Cardiac septum (tissue), 1 donor: ENCODE measurements at regions of chr17 and their contacts with region 1.

Region 1: GRCh38 chr17:45277216-45277849 is 15.4 kb upstream of the SPATA32 start:
- DNase-seq: peak; percentile 96

Region 2: DNA sequence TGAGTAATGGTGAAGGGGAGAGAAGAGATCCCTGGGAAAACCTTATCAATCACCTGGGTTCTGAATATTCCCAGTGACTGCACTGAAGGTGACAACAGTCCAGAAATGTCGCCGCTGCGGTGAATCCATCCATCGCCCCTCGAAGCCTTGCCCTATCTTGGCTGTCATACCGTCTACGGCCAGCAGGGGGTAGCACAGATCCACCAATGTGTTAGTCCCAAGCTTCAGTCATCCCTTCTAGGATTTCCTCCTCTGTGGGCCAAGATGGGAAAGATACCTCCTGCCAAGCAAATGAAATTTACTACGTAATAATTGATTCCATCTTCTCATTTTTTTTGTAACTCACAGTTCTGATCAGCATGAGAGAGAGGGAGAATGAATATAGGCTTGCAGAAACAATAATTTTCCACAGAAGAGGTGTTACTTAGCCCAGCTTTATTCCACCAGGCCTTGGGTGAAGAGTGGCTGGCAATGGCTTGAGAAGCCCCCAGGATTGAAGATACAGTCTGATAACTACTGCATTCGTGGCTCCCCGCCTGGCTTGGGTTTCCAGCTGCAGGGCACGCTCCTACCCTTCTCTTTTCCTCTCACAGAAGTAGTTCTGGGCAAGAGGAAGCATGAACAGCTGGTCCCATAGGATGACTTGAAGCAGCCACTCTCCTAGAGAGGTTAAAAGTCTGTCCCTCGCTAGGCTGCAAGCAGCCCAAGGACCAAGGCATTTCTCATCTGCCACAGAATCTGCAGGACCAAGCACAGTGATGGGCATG is 58.3 kb before region 1 on chr17:
- intact Hi-C with region 1: loop called (anchors 5 kb)
- DNase-seq: peak; percentile 88

Region 3: GRCh38 chr17:45311760-45312476 is 34.6 kb after region 1 on chr17:
- intact Hi-C with region 1: loop called (anchors 1 kb)
- DNase-seq: peak; percentile 84

Region 4: DNA sequence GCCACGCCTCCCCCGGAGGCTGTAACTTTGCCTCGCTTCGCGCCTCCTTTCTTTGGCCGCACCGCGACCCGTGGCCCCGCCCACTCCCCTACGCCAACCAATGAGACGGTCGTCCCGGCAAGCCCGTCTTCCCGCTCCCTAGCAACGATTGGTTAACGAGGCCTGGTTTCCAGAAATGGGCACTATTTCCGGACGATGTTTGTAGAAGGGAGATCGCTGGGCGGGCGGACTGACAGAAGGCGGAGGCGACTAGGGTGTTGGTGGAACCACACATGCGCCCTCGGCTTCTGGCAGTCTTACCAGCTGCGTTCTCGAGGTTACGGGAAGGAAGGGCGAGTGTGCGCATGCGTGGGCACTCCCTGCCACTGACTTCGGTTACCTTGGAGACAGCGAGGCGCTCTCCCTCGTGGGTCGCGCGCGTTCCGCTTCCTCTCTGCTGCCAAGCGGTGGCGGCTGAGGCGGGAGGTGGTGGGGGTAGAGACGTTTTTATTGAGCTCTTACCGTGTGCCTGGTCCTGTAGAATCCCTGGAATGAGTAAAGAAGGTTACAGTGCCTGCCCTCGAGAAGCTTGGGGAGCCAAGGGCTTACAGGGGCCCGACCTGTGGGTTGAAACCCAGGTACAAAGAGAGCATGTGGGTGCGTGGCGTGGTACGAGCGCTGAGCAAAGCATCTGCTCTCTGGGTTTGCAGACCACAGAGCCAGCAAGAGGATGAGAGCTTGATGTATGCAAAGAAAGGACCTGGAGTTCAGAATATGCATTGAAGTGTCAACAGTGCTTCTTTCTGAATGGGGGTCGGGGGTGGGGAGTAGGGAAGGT is 40.0 kb after region 1 on chr17:
- intact Hi-C with region 1: loop called (anchors 2 kb)
- DNase-seq: peak; percentile 100

Region 5: DNA sequence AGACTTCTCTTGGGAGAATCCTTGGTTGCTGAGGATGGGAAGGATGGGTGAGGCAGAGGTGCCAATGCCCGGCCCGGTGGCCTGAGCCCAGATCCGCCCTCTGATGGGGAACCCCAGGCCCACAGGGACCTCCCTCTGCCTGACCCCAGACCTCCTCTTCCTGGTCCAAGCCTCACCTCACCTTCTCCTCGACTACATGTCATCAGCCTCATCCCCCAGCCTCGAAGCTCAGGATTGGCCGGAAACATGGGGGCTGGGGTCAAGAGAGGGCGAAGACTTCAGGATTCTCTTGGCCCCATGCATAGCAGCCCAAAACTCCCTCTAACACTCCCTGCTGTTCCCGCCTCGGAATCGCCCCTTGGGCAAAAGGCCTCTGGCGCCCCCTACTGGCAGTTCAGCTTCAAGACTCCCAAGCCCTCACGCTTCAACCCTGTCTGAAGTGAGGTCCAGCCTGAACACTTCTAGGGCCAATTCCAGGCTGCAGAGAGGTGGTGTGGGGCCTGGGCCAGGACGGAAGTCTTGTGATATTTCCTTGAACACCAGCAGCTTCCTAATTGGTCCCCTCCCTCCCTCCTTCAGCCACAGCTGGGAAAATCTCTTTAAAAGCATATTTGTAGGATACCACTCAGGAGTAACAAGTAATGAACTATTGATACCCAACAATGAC is 108.1 kb after region 1 on chr17:
- intact Hi-C with region 1: loop called (anchors 1 kb)
- DNase-seq: peak; percentile 95